ENCODE measurements at regions of chr9 and their contacts with region 1.

Region 1: DNA sequence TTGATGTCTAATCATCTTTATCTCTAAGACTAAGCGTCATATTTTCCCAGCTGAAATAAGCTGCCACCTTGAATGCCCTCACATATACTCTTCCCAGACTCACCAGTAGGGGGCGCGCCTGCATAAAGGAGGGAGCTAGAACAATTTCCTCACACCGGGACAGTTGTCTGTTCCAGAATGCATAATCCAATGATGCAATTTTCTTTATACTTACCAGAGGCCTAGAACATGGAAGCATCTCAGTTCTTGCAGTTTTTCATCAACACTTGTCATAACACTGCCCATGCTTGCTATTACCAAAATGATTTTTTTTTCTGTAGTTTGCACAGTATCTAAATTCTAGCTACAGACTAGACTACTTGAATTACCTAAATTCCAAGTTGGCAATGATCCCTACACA is 203.9 kb downstream of the FRMD3 start:
- DNase-seq: peak; percentile 53
- H3K4me3 ChIP-seq: peak overlapping the region in 1 of 2 experiments; percentile 27; a peak in 1 of 4 replicates
- H3K27ac ChIP-seq: peak overlapping the region in 1 of 2 experiments; percentile 8; a peak in 2 of 4 replicates
- H3K4me1 ChIP-seq: no peaks in the 10 kb centered on the region; a peak in 2 of 4 replicates
- H3K27me3 ChIP-seq: no peaks in the 10 kb centered on the region
- CTCF ChIP-seq: peak; percentile 97
- EP300 ChIP-seq: no peak; a peak in 1 of 4 replicates
- RAD21 ChIP-seq: peak; percentile 99

Region 2: DNA sequence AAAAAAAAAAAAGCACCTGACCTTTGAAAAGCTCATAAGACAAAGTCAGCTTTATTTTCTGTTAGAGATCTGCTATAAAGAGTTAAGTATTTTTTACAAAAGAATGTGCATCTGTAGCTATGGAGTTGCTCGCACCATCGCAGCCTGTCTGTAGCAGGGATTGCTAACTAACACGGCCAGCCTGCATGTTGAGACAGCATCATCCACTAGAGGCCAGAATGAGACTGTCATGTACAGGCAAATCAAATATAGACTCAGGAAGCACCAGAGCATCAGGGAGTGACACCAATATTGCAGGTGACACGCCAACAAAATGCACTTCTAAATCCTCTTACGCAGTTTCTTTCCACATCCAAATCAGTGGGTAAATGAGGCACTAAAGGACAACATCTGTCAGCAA is 135.1 kb before region 1 on chr9:
- CTCF ChIA-PET with region 1: interaction called, 12 read pairs
- POLR2A ChIA-PET with region 1: no interaction called
- DNase-seq: peak; percentile 63
- H3K4me3 ChIP-seq: no peak overlapping the region; a peak in 1 of 4 replicates
- H3K27ac ChIP-seq: no peak overlapping the region
- H3K4me1 ChIP-seq: peaks cover 0 to 8% of the 10 kb centered on the region in 2 experiments; a peak in 1 of 4 replicates
- H3K27me3 ChIP-seq: peaks cover 4% of the 10 kb centered on the region; the same call in 1 of the 2 replicates
- CTCF ChIP-seq: peak; percentile 69
- EP300 ChIP-seq: no peak
- RAD21 ChIP-seq: peak; percentile 97

Region 3: GRCh38 chr9:83346655-83347420 is 12.5 kb after region 1 on chr9:
- CTCF ChIA-PET with region 1: interaction called, 34 read pairs
- POLR2A ChIA-PET with region 1: interaction called, 4 read pairs
- DNase-seq: no peak
- H3K4me3 ChIP-seq: no peak overlapping the region
- H3K27ac ChIP-seq: peak overlapping the region in 1 of 2 experiments; percentile 23; a peak in 1 of 4 replicates
- H3K4me1 ChIP-seq: peaks cover 0 to 27% of the 10 kb centered on the region in 2 experiments; a peak in 2 of 4 replicates
- H3K27me3 ChIP-seq: no peaks in the 10 kb centered on the region
- CTCF ChIP-seq: no peak
- EP300 ChIP-seq: no peak
- RAD21 ChIP-seq: no peak

Region 4: DNA sequence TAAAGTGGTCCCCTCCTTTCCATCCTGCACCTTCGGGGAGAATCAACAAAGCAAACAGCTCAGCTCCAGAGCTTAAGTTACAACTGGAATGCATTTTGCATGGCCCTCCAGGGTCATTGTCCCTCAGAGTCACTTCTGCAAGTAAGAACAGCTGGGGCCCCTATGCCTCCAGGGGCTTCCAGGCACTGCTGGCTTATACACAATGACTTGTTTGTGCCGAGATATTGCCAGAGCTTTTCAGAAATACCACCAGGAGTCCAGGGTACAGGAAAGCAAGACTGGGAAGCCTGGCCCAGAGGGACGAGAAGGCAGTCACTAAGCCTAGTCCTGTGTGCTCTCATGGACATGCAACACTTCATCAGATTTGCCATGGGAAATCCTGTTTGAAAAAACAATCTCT is 192.6 kb after region 1 on chr9:
- CTCF ChIA-PET with region 1: interaction called, 23 read pairs
- POLR2A ChIA-PET with region 1: no interaction called
- DNase-seq: no peak
- H3K4me3 ChIP-seq: no peak overlapping the region
- H3K27ac ChIP-seq: peak overlapping the region in 1 of 2 experiments; percentile 28; a peak in 1 of 4 replicates
- H3K4me1 ChIP-seq: peaks cover 4 to 10% of the 10 kb centered on the region in 2 experiments; a peak in 2 of 4 replicates
- H3K27me3 ChIP-seq: no peaks in the 10 kb centered on the region
- CTCF ChIP-seq: no peak
- EP300 ChIP-seq: no peak
- RAD21 ChIP-seq: no peak

Region 5: GRCh38 chr9:83544002-83544698 is 209.8 kb after region 1 on chr9:
- CTCF ChIA-PET with region 1: interaction called, 111 read pairs
- POLR2A ChIA-PET with region 1: no interaction called
- DNase-seq: peak; percentile 56
- H3K4me3 ChIP-seq: no peak overlapping the region; a peak in 1 of 4 replicates
- H3K27ac ChIP-seq: no peak overlapping the region
- H3K4me1 ChIP-seq: peaks cover 0 to 8% of the 10 kb centered on the region in 2 experiments; a peak in 1 of 4 replicates
- H3K27me3 ChIP-seq: no peaks in the 10 kb centered on the region
- CTCF ChIP-seq: peak; percentile 84
- EP300 ChIP-seq: no peak
- RAD21 ChIP-seq: peak; percentile 90

Region 6: GRCh38 chr9:83563360-83563759 is 229.0 kb after region 1 on chr9:
- CTCF ChIA-PET with region 1: no interaction called
- POLR2A ChIA-PET with region 1: no interaction called
- DNase-seq: no peak
- H3K4me3 ChIP-seq: no peak overlapping the region
- H3K27ac ChIP-seq: no peak overlapping the region
- H3K4me1 ChIP-seq: peaks cover 0 to 2% of the 10 kb centered on the region in 2 experiments; a peak in 1 of 4 replicates
- H3K27me3 ChIP-seq: no peaks in the 10 kb centered on the region; the same call in 1 of the 2 replicates
- CTCF ChIP-seq: no peak
- EP300 ChIP-seq: no peak
- RAD21 ChIP-seq: no peak

Region 7: GRCh38 chr9:83617299-83617698 is 283.0 kb after region 1 on chr9:
- CTCF ChIA-PET with region 1: interaction called, 14 read pairs
- POLR2A ChIA-PET with region 1: no interaction called
- DNase-seq: no peak
- H3K4me3 ChIP-seq: no peak overlapping the region
- H3K27ac ChIP-seq: no peak overlapping the region
- H3K4me1 ChIP-seq: peaks cover 0 to 3% of the 10 kb centered on the region in 2 experiments; a peak in 1 of 4 replicates
- H3K27me3 ChIP-seq: no peaks in the 10 kb centered on the region
- CTCF ChIP-seq: no peak
- EP300 ChIP-seq: no peak
- RAD21 ChIP-seq: no peak

Region 8: DNA sequence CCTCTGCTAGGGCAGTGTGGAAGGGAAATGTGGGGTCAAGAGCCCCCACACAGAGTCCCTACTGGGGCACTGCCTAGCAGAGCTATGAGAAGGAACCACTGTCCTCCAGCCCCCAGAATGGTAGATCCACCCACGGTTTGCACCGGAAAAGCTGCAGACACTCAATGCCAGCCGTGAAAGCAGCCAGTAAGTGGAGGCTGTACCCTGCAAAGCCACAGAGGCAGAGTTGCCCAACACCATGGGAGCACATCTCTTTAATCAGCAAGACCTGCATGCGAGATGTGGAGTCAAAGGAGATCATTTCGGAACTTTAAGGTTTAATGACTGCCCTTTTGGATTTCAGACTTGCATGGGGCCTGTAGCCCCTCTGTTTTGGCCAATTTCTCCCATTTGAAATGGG is 431.1 kb after region 1 on chr9:
- CTCF ChIA-PET with region 1: no interaction called
- POLR2A ChIA-PET with region 1: no interaction called
- DNase-seq: no peak
- H3K4me3 ChIP-seq: no peak overlapping the region
- H3K27ac ChIP-seq: no peak overlapping the region
- H3K4me1 ChIP-seq: no peaks in the 10 kb centered on the region
- H3K27me3 ChIP-seq: no peaks in the 10 kb centered on the region
- CTCF ChIP-seq: no peak
- EP300 ChIP-seq: no peak
- RAD21 ChIP-seq: no peak